ENCODE measurements at regions of chr3 and their contacts with region 1.

Region 1: GRCh38 chr3:156674046-156674910 is at the start of gene TIPARP:
- DNase-seq: peak; percentile 99
- H3K4me3 ChIP-seq: peak within 1 kb of the TSS; percentile 90 to 97 (median 93)
- H3K27ac ChIP-seq: peak within 1 kb of the TSS; percentile 94 to 97
- H3K4me1 ChIP-seq: no peaks in the 10 kb centered on the region
- H3K27me3 ChIP-seq: no peaks in the 10 kb centered on the region
- CTCF ChIP-seq: peak; percentile 19 to 91 (median 81)
- POLR2A ChIP-seq: peak; percentile 96
- total RNA-seq, gene TIPARP: 28.5 to 103 (median 45.1) TPM

Region 2: DNA sequence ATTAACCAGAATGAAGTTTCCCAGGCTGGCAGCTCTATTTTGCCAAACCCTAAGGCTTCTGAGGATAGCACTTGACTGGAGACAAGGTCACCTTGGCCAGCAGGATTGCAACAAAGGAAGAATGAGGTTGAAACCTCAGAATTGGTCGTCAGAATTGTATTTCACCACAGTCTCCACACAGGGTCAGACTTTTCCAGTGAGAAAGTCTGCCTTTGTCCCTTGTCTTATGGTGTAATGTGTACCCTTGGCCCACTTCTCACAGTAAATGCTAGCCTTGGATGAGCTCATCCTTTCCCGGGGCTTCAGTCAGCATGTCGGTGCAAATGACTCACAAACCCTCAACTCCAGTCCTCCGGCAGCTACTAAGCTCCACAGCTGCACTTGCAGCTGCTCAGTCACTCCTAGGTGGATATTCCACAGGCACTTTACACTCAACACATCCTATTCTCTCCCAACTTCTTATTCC is 139.1 kb before region 1 on chr3:
- intact Hi-C with region 1: loop called (anchors 5 kb)
- DNase-seq: peak in 1 of 2 donors; percentile 86
- H3K4me3 ChIP-seq: no peak overlapping the region
- H3K27ac ChIP-seq: peak overlapping the region; percentile 83 to 93
- H3K4me1 ChIP-seq: no peaks in the 10 kb centered on the region
- H3K27me3 ChIP-seq: no peaks in the 10 kb centered on the region
- CTCF ChIP-seq: peak; percentile 16 to 46 (median 23)
- POLR2A ChIP-seq: no peak

Region 3: DNA sequence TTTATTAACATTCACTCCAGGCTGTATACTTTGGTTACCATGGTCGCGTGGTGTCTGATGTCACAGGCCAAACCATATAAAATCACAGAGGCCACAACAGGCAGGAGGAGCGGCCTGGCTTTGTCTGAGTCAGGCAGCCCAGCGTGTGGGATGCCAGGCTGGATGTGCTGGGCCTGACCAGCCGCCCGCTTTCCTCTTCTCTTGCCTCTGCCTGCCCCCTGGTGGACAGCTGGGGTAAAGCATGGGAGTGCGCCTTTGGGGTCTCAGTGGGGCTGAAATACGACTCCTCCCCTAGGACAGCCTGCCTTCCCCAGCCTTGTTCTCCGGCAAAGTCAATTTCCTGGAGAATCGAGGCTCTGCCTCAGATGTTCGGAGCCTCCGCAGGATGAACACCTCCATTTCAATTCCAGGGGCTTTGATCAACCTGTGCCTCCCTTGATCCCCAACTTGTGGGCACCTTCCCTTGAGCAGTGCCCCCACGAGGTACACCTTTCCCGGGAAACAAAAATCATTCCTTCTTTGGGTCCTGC is 407.5 kb after region 1 on chr3:
- intact Hi-C with region 1: loop called (anchors 10 kb)
- DNase-seq: peak; percentile 84 to 88
- H3K4me3 ChIP-seq: peak overlapping the region in 1 of 3 donors; percentile 19
- H3K27ac ChIP-seq: peak overlapping the region; percentile 2 to 60
- H3K4me1 ChIP-seq: peaks cover 0 to 5% of the 10 kb centered on the region in 2 donors
- H3K27me3 ChIP-seq: no peaks in the 10 kb centered on the region
- CTCF ChIP-seq: peak; percentile 99
- POLR2A ChIP-seq: no peak